ENCODE measurements at regions of chr6 and their contacts with region 1.

Region 1: DNA sequence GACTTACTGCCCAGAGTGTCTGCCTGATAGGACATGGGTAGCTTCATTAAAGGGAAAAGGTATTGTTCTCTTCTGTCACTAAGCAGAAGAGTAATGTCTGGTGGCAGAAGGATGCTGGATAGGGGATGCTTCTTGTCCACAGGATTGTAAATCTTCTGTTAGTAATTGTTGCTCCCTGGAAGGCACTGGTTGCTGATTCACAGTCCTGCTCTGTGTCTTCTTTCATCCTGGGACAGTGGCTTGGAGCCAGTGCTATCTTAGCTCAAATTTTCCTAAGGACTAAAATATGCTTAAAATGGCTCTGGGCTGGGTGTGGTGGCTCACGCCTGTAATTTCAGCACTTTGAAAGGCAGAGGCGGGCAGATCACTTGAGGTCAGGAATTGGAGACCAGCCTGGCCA is 48.0 kb downstream of the SYTL3 start:
- DNase-seq: no peak
- H3K4me3 ChIP-seq: no peak overlapping the region
- H3K27ac ChIP-seq: no peak overlapping the region
- H3K4me1 ChIP-seq: peaks cover 0 to 6% (median 1%) of the 10 kb centered on the region in 4 donors
- H3K27me3 ChIP-seq: no peaks in the 10 kb centered on the region
- CTCF ChIP-seq: no peak
- EP300 ChIP-seq: no peak
- POLR2A ChIP-seq: no peak

Region 2: DNA sequence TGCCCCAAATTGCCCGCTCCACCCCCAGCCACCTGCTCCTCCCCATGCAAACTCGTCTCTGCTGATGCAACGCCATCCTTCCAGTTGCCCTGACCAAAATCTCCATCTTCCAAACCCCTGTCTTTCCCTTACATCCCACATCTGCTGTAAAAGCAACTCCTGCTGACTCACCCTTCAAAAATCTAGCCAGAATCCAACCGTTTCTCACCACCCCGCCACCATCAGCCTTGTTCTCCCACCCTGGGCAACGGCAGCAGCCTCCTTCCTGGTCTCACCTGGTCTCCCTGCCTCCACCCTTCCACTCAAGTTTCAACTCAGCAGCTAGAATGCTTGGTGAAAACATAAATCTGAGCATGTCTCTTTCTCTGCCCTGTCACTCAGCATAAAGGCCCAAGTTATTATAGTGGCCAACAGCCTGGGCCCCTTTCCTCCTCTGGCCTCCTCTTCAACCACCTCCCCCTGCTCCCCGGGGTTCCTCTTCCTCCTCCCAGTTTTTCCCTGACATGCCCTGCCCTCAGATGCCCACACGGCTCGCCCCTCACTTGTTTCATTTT is 723.4 kb before region 1 on chr6:
- intact Hi-C with region 1: no loop called
- DNase-seq: no peak
- H3K4me3 ChIP-seq: no peak overlapping the region
- H3K27ac ChIP-seq: no peak overlapping the region
- H3K4me1 ChIP-seq: no peaks in the 10 kb centered on the region
- H3K27me3 ChIP-seq: no peaks in the 10 kb centered on the region
- CTCF ChIP-seq: no peak
- EP300 ChIP-seq: no peak
- POLR2A ChIP-seq: no peak

Region 3: GRCh38 chr6:158631678-158632537 is 65.9 kb before region 1 on chr6:
- intact Hi-C with region 1: loop called (anchors 10 kb)
- DNase-seq: peak; percentile 93
- H3K4me3 ChIP-seq: peak overlapping the region in 2 of 4 donors; percentile 7 to 27
- H3K27ac ChIP-seq: peak overlapping the region; percentile 62 to 80 (median 72)
- H3K4me1 ChIP-seq: peaks cover 13 to 25% (median 23%) of the 10 kb centered on the region in 4 donors
- H3K27me3 ChIP-seq: no peaks in the 10 kb centered on the region
- CTCF ChIP-seq: no peak
- EP300 ChIP-seq: no peak
- POLR2A ChIP-seq: no peak

Region 4: DNA sequence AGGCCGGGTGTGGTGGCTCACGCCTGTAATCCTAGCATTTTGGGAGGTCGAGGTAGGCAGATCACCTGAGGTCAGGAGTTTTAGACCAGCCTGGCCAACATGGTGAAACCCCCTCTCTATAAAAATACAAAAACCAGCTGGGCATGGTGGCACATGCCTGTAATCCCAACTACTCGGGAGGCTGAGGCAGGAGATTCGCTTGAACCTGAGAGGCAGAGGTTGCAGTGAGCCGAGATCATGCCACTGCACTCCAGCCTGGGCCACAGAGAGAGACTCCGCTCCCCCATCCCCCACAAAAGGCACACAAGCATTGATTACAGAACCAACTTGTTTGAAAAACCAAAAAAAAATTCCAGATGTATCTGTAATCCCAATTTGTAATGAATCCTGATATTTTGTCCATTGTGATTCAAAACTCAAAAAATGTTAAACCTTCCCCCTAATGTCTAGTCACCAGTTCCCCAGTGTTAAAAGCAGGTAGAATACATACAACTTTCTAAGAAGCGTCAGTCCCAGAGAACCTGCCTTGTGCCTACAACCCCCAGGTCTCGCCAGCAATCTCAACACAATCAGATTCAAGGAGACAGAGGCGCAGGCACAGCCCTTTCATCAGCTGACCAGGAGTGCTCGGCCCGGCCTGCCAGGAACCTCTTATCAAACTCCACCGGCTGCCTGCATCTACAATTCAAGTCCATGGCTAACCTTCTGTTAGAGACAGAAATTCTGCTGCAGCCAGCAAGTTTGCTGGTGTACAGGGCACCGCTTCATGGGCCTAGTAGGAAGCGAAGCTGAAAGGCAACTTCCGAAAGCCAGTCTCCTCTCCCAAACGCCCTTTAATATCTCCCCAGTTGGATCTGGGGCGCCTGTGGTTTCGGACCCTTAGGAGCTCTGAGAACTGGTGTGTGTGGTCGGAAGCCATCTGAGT is 119.3 kb after region 1 on chr6:
- intact Hi-C with region 1: no loop called
- DNase-seq: no peak
- H3K4me3 ChIP-seq: peak overlapping the region; percentile 69 to 95 (median 94)
- H3K27ac ChIP-seq: peak overlapping the region; percentile 98 to 100 (median 98)
- H3K4me1 ChIP-seq: peaks cover 45 to 64% (median 60%) of the 10 kb centered on the region in 4 donors
- H3K27me3 ChIP-seq: no peaks in the 10 kb centered on the region
- CTCF ChIP-seq: no peak
- EP300 ChIP-seq: no peak
- POLR2A ChIP-seq: no peak

Measured in esophagus muscularis mucosa (tissue), 4 donors.